Activated naive CD4-positive, alpha-beta T cell treated with anti-CD3 and anti-CD28 coated beads for 36 hours (primary cell): ENCODE measurements at regions of chr16 and their contacts with region 1.

Region 1: DNA sequence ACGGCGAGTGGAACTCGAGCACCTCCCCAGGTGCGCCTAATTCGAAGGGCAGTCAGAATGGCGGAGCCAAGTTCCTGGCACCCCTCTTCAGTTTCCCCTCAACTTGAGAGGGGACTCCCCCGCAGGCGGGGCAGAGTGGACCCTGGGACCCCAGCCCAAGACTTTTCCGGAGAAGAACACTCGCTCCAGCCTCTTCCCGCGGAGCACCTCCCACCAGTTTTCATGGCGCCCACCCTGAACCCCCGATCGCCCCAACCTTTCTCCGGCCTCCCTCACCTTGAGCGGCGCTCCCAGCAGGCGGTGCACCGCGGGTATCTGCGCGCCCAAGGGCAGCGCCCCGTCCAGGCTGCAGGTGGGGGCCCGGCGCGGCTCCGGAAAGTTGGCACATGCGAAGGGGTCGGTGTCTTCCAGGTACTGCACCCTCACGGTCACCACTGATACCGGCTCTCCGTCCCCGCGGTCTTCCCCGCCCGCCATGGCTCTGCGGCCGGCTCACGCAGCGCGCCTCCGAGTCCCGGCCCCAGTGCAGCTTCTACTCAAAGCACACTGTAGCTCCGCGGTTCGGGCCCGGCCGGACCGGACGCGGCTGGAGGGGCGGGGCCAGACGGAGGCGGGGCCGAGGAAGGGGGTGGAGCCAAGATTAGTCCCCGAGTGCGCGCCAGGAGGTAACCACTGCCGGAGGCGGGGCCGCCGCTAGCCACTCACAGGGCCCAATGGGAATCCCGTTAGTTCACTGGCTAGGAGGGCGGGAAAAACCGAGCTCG is at the start of gene FHOD1:
- DNase-seq: peak; percentile 99
- H3K4me3 Mint-ChIP-seq: peak within 1 kb of the TSS; percentile 89
- H3K27ac Mint-ChIP-seq: peak within 1 kb of the TSS; percentile 76
- H3K4me1 Mint-ChIP-seq: peaks cover 51% of the 10 kb centered on the region
- H3K27me3 Mint-ChIP-seq: peaks cover 8% of the 10 kb centered on the region
- total RNA-seq, gene FHOD1: 70.7 to 73.7 TPM

Region 2: GRCh38 chr16:66416939-66417700 is 830.0 kb before region 1 on chr16:
- CTCF ChIA-PET with region 1: no interaction called
- intact Hi-C with region 1: no loop called
- DNase-seq: no peak
- H3K4me3 Mint-ChIP-seq: no peak overlapping the region
- H3K27ac Mint-ChIP-seq: no peak overlapping the region
- H3K4me1 Mint-ChIP-seq: no peaks in the 10 kb centered on the region
- H3K27me3 Mint-ChIP-seq: peaks cover 3% of the 10 kb centered on the region

Region 3: GRCh38 chr16:66947302-66948065 is 299.6 kb before region 1 on chr16:
- CTCF ChIA-PET with region 1: no interaction called
- intact Hi-C with region 1: loop called (anchors 1 kb)
- DNase-seq: peak; percentile 95
- H3K4me3 Mint-ChIP-seq: peak overlapping the region; percentile 81
- H3K27ac Mint-ChIP-seq: no peak overlapping the region
- H3K4me1 Mint-ChIP-seq: peaks cover 17% of the 10 kb centered on the region
- H3K27me3 Mint-ChIP-seq: peaks cover 34% of the 10 kb centered on the region

Region 4: GRCh38 chr16:67028555-67029248 is 218.4 kb before region 1 on chr16 and contains the start of gene CBFB:
- CTCF ChIA-PET with region 1: no interaction called
- intact Hi-C with region 1: loop called (anchors 1 kb)
- DNase-seq: peak; percentile 93
- H3K4me3 Mint-ChIP-seq: peak within 1 kb of the TSS; percentile 86
- H3K27ac Mint-ChIP-seq: peak within 1 kb of the TSS; percentile 91
- H3K4me1 Mint-ChIP-seq: peaks cover 38% of the 10 kb centered on the region
- H3K27me3 Mint-ChIP-seq: no peaks in the 10 kb centered on the region
- total RNA-seq, gene CBFB: 79.6 to 86.8 TPM

Region 5: DNA sequence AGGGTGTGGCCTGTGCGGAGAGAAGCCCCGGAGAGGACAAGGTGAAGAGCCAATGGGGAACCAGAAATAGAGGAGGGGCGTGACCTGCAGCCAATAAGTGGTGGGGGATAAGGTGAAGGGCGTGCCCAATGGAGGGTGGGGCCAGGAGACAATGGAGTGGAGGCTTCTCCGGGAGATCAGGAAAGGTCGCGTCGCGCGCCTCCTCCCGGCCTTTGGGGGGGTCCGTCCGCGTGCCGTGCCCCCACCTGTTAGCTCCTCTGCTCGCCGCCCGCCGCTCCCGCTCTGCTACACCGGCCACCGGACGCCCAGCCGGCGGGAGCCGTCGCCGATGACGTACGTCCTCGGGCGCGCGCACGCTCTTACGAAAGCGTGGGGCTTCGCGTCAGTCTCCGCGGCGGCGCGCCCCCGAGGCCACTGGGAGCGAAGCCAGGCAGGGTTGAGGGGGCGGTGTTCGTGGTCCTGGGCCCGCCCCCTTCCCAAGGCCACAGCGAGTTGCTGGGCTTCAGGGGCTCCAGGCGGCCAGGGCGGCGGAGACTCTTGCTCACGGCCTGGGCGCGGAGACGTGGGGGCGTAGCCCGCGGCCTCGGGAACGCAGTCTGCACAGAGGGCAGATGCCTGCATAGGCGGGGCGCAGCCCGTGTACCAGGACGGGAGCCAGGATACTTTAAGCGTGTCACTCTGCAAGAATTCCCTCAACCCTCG is 63.3 kb before region 1 on chr16 and contains the start of gene MATCAP1:
- CTCF ChIA-PET with region 1: interaction called, 6 read pairs
- intact Hi-C with region 1: loop called (anchors 1 kb)
- DNase-seq: peak; percentile 97
- H3K4me3 Mint-ChIP-seq: peak within 1 kb of the TSS; percentile 50
- H3K27ac Mint-ChIP-seq: no peak within 1 kb of the TSS
- H3K4me1 Mint-ChIP-seq: peaks cover 12% of the 10 kb centered on the region
- H3K27me3 Mint-ChIP-seq: peaks cover 17% of the 10 kb centered on the region
- total RNA-seq, gene MATCAP1: 21.9 to 24.0 TPM

Region 6: DNA sequence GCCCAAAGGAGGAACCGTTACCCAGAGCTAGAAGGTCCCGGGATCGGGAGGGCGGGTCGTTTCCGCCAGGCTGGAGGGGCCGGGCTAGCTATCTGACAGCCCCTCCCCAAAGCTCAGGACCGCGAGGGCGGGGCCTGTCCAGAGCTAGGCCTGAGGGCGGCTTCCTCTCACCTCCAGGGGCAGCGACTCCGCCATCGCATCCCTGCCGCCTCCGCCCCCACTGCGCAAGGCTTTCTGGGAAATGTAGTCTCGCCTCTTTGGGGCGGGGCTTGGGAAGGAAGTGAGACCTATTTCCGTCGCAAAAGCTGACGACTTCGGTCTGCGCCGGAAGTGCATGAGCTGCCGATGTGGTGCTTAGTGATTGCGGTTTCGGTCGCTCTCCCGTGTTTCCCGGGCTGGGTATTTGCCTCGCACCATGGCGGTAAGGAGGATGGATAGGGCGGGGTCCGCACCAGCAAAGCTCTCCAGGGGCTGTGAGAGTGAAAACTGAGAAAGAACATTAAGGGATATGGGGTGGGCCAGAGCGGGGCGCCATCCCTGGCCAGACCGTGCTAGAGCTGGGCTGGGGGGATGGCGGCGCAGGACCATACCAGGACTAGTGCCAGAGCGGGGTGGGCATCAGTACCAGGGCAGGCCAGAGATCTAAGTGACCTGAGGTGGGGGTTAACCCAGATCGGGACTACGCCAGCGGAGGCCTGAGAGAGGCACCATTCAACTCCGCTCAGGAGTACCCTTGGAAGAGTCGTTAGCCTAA is 20.1 kb before region 1 on chr16 and contains the start of gene TMEM208:
- CTCF ChIA-PET with region 1: interaction called, 9 read pairs
- intact Hi-C with region 1: loop called (anchors 1 kb)
- DNase-seq: peak; percentile 99
- H3K4me3 Mint-ChIP-seq: peak within 1 kb of the TSS; percentile 100
- H3K27ac Mint-ChIP-seq: peak within 1 kb of the TSS; percentile 96
- H3K4me1 Mint-ChIP-seq: peaks cover 51% of the 10 kb centered on the region
- H3K27me3 Mint-ChIP-seq: no peaks in the 10 kb centered on the region
- total RNA-seq, gene TMEM208: 24.6 to 29.4 TPM

Region 7: DNA sequence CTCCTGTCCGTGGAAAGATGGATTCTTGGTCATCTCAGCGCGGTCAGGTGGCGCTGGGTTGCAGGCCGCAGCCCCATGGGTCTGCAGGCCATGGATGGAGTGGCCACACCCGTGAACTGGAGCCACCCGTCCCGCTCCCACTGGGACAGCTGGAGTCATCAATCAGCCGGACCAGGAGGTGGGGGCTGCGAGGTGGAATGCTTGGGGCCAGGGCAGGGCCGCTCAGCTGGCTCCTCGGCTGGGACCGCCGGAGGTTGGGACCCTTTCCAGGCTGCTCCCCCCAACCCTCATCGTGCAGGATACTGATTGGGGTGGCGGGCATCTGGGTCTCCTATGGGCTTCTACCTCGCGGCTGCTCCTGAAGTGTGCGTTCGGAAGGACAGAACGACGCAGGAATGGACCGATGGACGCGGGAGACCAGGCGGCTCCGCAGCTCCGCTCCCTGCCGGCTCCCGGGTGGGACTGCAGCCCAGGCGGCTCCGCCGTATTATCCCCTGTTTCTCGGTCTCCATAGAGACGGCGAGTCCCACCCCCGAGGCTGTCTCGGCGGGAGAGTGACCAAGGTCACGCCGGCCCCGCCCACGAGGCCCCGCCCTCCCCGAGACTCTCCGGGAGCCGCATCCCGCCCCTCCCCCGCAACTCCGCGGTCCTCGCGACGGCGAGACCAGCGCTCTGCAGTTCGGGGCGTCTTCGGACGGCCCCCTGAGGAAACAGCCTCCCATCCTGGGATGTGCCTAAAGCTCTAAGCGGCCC is 146.1 kb after region 1 on chr16 and contains the start of gene TPPP3:
- CTCF ChIA-PET with region 1: no interaction called
- intact Hi-C with region 1: no loop called
- DNase-seq: peak; percentile 47
- H3K4me3 Mint-ChIP-seq: peak within 1 kb of the TSS; percentile 15
- H3K27ac Mint-ChIP-seq: no peak within 1 kb of the TSS
- H3K4me1 Mint-ChIP-seq: peaks cover 7% of the 10 kb centered on the region
- H3K27me3 Mint-ChIP-seq: peaks cover 20% of the 10 kb centered on the region
- total RNA-seq, gene TPPP3: not detected

Region 8: GRCh38 chr16:67447508-67448076 is 200.5 kb after region 1 on chr16:
- CTCF ChIA-PET with region 1: no interaction called
- intact Hi-C with region 1: no loop called
- DNase-seq: peak; percentile 90
- H3K4me3 Mint-ChIP-seq: no peak overlapping the region
- H3K27ac Mint-ChIP-seq: no peak overlapping the region
- H3K4me1 Mint-ChIP-seq: no peaks in the 10 kb centered on the region
- H3K27me3 Mint-ChIP-seq: no peaks in the 10 kb centered on the region

Region 9: GRCh38 chr16:68704232-68704867 is 1457.2 kb after region 1 on chr16:
- CTCF ChIA-PET with region 1: no interaction called
- intact Hi-C with region 1: no loop called
- DNase-seq: peak; percentile 85
- H3K4me3 Mint-ChIP-seq: no peak overlapping the region
- H3K27ac Mint-ChIP-seq: no peak overlapping the region
- H3K4me1 Mint-ChIP-seq: peaks cover 3% of the 10 kb centered on the region
- H3K27me3 Mint-ChIP-seq: no peaks in the 10 kb centered on the region